Activated naive CD4-positive, alpha-beta T cell treated with anti-CD3 and anti-CD28 coated beads, Interleukin-2, amount 10 ng/mL, durations not matched to agents 7 days and 5 days (primary cell): ENCODE measurements at regions of chr1 and their contacts with region 1.

Region 1: GRCh38 chr1:61049850-61050540 is 32.4 kb upstream of the NFIA start:
- DNase-seq: peak; percentile 89
- H3K4me3 Mint-ChIP-seq: peak overlapping the region; percentile 74
- H3K27ac Mint-ChIP-seq: no peak overlapping the region
- H3K4me1 Mint-ChIP-seq: peaks cover 37% of the 10 kb centered on the region
- H3K27me3 Mint-ChIP-seq: peaks cover 72% of the 10 kb centered on the region

Region 2: GRCh38 chr1:60922304-60922703 is 127.7 kb before region 1 on chr1:
- CTCF ChIA-PET with region 1: no interaction called
- DNase-seq: no peak
- H3K4me3 Mint-ChIP-seq: no peak overlapping the region
- H3K27ac Mint-ChIP-seq: no peak overlapping the region
- H3K4me1 Mint-ChIP-seq: no peaks in the 10 kb centered on the region
- H3K27me3 Mint-ChIP-seq: no peaks in the 10 kb centered on the region

Region 3: GRCh38 chr1:60989749-60990713 is 60.0 kb before region 1 on chr1:
- CTCF ChIA-PET with region 1: no interaction called
- DNase-seq: no peak
- H3K4me3 Mint-ChIP-seq: no peak overlapping the region
- H3K27ac Mint-ChIP-seq: no peak overlapping the region
- H3K4me1 Mint-ChIP-seq: no peaks in the 10 kb centered on the region
- H3K27me3 Mint-ChIP-seq: peaks cover 8% of the 10 kb centered on the region

Region 4: DNA sequence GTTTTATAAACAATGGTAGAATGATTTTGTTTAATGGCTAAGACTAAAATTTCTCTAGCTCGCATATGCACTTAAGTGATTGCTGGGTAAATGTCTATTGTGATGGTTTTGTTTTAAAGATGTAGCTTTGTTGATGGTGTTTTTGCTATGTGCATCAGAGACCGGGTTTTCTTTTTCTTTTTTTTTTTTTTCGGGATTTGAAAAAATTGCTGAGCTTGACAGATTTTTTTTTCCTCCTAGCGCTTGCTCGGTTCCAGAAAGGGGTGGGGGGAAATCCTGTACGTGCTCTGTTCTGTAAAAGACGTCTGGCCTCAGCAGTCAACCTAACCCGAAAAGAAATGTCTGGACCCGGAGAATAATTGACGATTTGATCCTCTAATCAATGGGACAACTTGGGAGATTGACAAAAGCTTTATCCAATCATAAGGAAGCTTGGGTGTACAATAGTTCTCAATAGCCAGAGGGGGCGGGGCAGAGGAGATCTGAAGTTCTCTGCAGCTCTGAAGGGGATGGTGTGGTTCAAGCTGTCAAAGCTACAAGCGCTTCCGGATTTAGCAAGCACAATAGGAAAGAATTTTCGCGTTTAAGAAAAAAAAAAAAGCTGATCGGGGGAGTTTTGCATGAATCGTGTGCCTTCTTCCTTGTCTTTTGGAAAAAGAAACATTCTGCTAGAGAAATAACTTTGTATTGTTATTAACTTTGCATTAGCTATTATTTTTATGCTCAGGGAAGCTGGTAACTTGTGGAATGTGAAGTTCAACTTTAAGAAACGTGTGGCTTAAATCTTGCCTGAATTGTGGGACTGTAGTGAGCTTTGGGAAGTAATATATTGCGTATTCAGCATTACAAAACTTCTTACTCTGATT is 27.9 kb after region 1 on chr1:
- CTCF ChIA-PET with region 1: interaction called, 20 read pairs
- DNase-seq: peak; percentile 95
- H3K4me3 Mint-ChIP-seq: peak overlapping the region; percentile 90
- H3K27ac Mint-ChIP-seq: peak overlapping the region; percentile 97
- H3K4me1 Mint-ChIP-seq: peaks cover 45% of the 10 kb centered on the region
- H3K27me3 Mint-ChIP-seq: peaks cover 51% of the 10 kb centered on the region

Region 5: DNA sequence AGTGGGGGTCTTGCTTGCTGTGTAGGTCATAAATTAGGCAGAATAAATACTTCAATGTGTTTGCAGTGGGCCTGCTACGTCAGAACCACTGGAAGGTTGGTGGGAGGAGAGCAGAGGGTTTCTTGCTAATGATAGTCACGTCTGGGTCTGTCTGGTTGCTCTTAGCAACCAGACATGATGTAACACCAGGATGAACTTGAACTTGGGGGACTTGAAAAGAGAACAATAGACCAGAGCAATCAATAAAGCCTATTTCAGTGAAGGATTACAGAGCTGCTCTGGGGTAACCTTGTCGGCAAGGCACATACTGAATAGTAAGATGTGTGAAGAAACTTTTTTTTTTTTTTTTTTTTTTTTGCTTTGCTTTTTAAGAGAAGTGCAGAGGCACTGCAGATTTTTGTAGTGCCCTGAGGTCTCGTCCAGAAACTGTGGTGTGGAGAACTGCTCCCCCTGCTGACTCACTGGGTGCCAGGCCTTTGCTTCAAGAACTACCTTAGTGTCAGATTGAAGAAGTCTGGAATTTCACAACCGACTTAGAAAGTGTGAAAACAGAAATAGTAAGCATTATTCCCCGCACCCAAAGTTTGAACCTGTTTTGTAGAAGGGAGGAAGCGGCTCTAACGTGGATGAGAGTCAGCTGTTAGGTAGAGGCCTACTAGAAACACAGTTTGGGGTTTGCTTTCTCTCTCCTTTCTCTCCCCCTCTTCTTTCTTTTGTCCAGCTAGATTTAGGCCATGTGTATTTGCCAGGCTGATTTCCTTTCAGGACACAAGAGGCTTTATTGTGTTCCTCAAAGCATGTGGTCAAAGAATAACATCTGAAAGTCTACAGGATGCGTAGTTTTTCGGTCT is 403.3 kb after region 1 on chr1:
- CTCF ChIA-PET with region 1: interaction called, 23 read pairs
- DNase-seq: peak; percentile 72
- H3K4me3 Mint-ChIP-seq: no peak overlapping the region
- H3K27ac Mint-ChIP-seq: no peak overlapping the region
- H3K4me1 Mint-ChIP-seq: peaks cover 2% of the 10 kb centered on the region
- H3K27me3 Mint-ChIP-seq: no peaks in the 10 kb centered on the region

Region 6: DNA sequence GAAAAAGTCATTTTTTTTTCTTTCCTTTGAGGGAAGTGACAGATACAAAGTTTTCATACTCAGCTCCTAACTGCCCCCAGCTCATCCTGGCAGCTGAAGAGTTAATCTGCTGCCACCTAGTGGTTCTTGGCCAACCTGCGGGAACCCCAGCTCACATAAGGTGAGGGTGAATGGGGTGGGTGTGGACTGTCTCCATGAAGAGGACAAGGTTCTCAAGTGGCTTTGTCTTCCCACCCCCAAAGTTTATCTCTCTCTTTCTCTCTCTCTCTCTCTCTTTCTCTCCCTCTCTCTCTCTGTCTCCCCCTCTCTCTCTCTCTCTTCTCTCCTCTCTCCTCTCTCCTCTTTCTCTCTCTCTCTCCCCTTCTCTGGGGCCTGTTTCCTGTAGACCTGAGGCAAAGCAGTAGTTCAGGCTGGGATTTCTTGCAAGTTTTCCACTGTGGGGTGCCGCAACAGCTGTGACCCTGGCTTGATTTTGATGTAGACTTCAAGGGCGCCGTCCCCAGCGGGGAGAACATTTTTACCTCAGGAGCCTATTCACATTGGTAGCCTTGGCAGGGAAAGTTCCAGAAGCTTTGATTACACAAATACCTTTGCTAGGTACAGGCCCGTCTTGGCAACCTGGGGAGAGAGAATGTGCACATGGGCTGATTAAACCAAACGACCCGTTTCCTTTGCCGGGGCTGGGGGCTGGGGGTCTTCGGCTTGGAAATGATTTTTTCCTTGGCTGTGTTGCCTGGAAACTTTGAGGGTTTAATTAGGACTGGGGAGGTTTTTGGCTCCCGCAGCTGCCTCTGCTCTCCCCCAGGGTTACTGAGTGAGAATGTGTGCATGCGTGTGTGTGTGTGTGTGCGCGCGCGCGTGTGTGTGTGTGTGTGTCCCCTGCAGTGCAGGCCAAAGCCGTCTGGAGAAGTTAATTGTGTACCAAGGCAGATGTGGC is 539.0 kb after region 1 on chr1:
- CTCF ChIA-PET with region 1: interaction called, 12 read pairs
- DNase-seq: peak; percentile 73
- H3K4me3 Mint-ChIP-seq: no peak overlapping the region
- H3K27ac Mint-ChIP-seq: no peak overlapping the region
- H3K4me1 Mint-ChIP-seq: no peaks in the 10 kb centered on the region
- H3K27me3 Mint-ChIP-seq: peaks cover 11% of the 10 kb centered on the region